ENCODE measurements at regions of chr7 and their contacts with region 1.

Region 1: GRCh38 chr7:135414850-135415439 is 95.0 kb downstream of the CNOT4 start:
- DNase-seq: peak; percentile 84 to 88 (median 86)
- H3K4me3 ChIP-seq: no peak overlapping the region
- H3K27ac ChIP-seq: no peak overlapping the region
- H3K4me1 ChIP-seq: peaks cover 0 to 9% (median 0%) of the 10 kb centered on the region in 4 experiments
- H3K27me3 ChIP-seq: no peaks in the 10 kb centered on the region

Region 2: GRCh38 chr7:135392701-135393100 is 22.2 kb before region 1 on chr7:
- CTCF ChIA-PET with region 1: no interaction called
- POLR2A ChIA-PET with region 1: no interaction called
- DNase-seq: no peak
- H3K4me3 ChIP-seq: no peak overlapping the region
- H3K27ac ChIP-seq: no peak overlapping the region
- H3K4me1 ChIP-seq: no peaks in the 10 kb centered on the region
- H3K27me3 ChIP-seq: no peaks in the 10 kb centered on the region

Region 3: DNA sequence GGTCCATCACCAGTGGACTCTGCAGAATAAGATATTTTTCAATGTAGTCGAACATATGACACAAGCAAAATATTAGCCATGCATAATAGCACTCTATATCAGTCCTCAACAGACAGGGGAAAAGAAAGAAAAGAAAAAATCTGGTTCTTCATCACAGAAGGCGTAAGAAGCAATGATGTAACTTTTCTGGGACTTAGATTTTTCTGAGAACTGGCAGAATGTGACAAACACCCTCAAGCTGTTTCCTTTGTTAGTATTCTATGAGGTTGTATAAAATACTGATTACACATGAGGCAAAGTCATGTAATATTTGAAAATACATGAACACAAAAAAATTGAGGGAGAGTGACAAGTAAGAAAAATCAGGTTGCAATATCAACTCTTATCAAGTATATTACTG is 10.1 kb after region 1 on chr7:
- CTCF ChIA-PET with region 1: interaction called, 13 read pairs
- POLR2A ChIA-PET with region 1: no interaction called
- DNase-seq: peak in 2 of 3 donors; percentile 43 to 59
- H3K4me3 ChIP-seq: no peak overlapping the region
- H3K27ac ChIP-seq: peak overlapping the region in 1 of 2 experiments; percentile 7
- H3K4me1 ChIP-seq: peaks cover 0 to 6% (median 2%) of the 10 kb centered on the region in 4 experiments
- H3K27me3 ChIP-seq: no peaks in the 10 kb centered on the region

Region 4: GRCh38 chr7:135558337-135558767 is 143.4 kb after region 1 on chr7:
- CTCF ChIA-PET with region 1: interaction called, 15 read pairs
- POLR2A ChIA-PET with region 1: no interaction called
- DNase-seq: peak; percentile 85 to 90 (median 90)
- H3K4me3 ChIP-seq: peak overlapping the region; percentile 85 to 98 (median 96)
- H3K27ac ChIP-seq: peak overlapping the region; percentile 99 to 100
- H3K4me1 ChIP-seq: peaks cover 6 to 28% (median 14%) of the 10 kb centered on the region in 4 experiments
- H3K27me3 ChIP-seq: no peaks in the 10 kb centered on the region

Measured in common myeloid progenitor, CD34-positive (primary cell).